Right ventricle myocardium inferior (tissue), 1 donor: ENCODE measurements at regions of chr6 and their contacts with region 1.

Region 1: DNA sequence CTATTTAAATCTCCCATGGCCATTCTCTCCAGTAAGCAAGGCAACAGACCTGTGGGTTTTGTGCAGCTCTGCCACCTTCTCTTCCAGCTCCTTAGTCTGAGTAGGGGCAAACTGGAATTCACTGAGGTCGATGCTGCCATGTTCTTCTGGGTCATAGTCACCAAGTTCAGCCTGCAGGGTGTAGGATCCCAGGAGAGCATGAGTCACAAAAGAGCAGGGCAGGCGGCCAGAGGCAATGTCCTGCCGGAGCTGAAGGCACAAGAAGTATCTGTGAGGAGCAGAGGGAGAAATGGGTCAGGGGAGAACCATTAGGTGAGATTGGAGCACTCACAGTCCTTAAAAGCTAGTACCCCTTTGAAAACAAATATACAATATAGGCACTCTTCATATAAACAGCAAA is 73.7 kb downstream of the SMLR1 start:
- DNase-seq: peak; percentile 71
- ATAC-seq: peak; percentile 72

Region 2: GRCh38 chr6:130945401-130945919 is 44.5 kb after region 1 on chr6:
- intact Hi-C with region 1: loop called (anchors 5 kb)
- DNase-seq: no peak
- ATAC-seq: no peak

Region 3: DNA sequence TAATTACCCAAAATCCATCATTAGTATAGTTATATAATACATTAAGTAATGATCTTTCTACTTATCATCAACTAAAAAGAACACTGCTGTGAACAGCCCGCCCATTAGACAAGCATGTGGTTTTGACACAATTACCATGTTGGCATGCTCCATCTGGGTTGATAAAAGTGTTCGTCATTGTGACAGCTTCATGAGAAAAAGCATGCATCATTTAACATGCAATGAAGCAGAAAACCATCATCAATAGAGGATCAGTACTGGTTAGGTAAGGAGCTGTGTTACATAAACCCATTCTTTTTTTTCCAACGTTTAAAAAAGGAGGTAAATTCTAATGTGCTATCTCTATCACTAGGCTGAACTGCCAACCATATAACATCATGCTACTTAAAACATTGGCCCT is 60.2 kb after region 1 on chr6:
- intact Hi-C with region 1: loop called (anchors 5 kb)
- DNase-seq: no peak
- ATAC-seq: no peak